Naive thymus-derived CD4-positive, alpha-beta T cell (primary cell): ENCODE measurements at regions of chr11 and their contacts with region 1.

Region 1: DNA sequence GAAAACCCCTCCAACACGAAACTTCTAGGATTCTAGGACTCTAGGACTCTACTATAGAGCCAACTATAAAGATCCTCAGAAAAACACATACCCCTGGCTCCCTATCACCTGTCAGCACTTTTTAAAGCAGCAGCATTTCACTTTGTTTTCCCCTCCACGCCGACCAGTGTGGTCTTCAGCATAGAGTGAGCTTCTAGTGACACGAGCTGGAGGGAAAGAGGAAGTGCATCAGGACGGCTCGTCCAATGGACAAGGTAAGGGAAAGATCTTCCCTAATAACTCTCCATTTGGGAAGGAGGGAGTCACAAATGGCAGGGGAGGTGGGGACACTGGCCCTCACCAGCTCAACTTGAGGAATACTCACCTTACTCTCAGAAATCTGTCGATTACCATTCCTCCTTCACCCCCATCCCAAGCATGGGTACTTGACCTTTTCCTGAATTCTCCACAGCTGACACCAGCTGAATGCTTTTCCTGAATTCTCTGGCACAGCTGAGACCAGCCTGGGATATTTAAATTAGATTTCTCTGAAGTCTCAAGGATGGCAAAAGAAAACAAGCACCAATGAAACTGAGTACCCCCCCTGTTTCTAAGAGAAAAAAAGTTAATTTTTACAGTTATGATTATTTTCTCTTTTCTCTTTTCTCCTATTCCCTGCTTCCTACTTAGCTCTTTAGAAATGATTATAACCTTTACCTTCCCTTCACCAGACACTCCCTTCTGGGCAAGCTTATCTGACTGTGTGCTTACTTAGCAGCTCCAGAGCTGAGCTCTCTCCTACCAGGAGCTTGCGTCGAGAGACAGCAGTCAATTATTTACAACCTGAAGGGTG is 33.3 kb upstream of the NNMT start:
- DNase-seq: peak in 6 of 9 donors; percentile 10 to 41 (median 27)
- ATAC-seq: peak; percentile 56
- H3K4me3 ChIP-seq: no peak overlapping the region
- H3K4me3 Mint-ChIP-seq: no peak overlapping the region
- H3K27ac ChIP-seq: no peak overlapping the region
- H3K27ac Mint-ChIP-seq: no peak overlapping the region
- H3K4me1 ChIP-seq: no peaks in the 10 kb centered on the region
- H3K4me1 Mint-ChIP-seq: peaks cover 0 to 7% (median 4%) of the 10 kb centered on the region in 7 donors
- H3K27me3 ChIP-seq: no peaks in the 10 kb centered on the region
- H3K27me3 Mint-ChIP-seq: peaks cover 0 to 5% (median 3%) of the 10 kb centered on the region in 5 donors

Region 2: DNA sequence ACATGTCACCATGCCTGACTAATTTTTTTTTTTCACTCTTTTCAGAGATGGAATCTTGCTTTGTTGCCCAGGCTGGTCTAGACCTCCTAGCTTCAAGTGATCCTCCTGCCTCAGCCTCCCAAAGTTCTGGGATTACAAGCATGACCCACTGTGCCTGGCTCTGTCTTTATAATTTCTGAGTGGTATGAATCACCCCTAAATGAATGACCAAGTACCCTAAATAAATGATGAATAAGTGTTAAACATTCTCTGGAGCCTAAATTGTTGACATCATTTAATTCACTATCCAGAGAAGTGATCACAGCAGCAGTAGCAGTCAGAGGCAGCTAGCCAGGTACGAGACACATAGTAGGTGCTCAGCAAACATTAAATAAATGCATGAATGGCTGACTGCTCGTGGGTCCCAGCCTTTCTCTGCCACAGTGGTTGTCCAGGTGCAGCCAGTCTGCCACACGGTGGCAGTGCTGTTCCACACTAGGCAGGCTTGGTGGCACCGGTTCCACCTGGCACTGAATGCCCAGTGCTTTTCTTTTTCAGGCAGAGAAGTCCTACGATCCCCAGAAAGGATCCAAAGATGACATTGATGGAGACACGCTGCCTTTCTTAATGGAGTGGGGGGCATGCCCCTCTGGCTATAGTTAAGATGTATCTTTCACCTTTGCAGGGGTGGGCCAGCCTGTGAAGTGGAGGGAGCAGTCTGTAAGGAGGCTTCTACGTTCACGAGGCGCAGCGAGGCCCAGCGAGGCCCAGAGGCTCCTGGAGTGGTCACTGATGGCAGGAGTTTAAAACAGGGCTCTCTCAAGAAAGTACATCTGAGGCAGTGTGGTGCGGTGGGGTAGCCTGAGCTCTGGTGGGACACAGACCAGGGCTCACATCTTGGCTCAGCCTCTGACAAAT is 957.2 kb before region 1 on chr11:
- CTCF ChIA-PET with region 1: interaction called, 3 read pairs
- POLR2A ChIA-PET with region 1: no interaction called
- intact Hi-C with region 1: loop called (anchors 2 to 5 kb)
- DNase-seq: peak; percentile 32 to 68 (median 61)
- ATAC-seq: peak; percentile 95
- H3K4me3 ChIP-seq: no peak overlapping the region
- H3K4me3 Mint-ChIP-seq: no peak overlapping the region
- H3K27ac ChIP-seq: no peak overlapping the region
- H3K27ac Mint-ChIP-seq: no peak overlapping the region
- H3K4me1 ChIP-seq: no peaks in the 10 kb centered on the region
- H3K4me1 Mint-ChIP-seq: peaks cover 0 to 8% (median 3%) of the 10 kb centered on the region in 7 donors
- H3K27me3 ChIP-seq: no peaks in the 10 kb centered on the region
- H3K27me3 Mint-ChIP-seq: peaks cover 0 to 25% (median 11%) of the 10 kb centered on the region in 5 donors

Region 3: GRCh38 chr11:113896156-113896879 is 366.6 kb before region 1 on chr11:
- CTCF ChIA-PET with region 1: interaction called, 143 read pairs
- POLR2A ChIA-PET with region 1: interaction called, 3 read pairs
- intact Hi-C with region 1: loop called (anchors 1 kb)
- DNase-seq: peak in 5 of 9 donors; percentile 24 to 42 (median 37)
- ATAC-seq: peak; percentile 80
- H3K4me3 ChIP-seq: no peak overlapping the region
- H3K4me3 Mint-ChIP-seq: no peak overlapping the region
- H3K27ac ChIP-seq: no peak overlapping the region
- H3K27ac Mint-ChIP-seq: no peak overlapping the region
- H3K4me1 ChIP-seq: no peaks in the 10 kb centered on the region
- H3K4me1 Mint-ChIP-seq: peaks cover 0 to 4% (median 0%) of the 10 kb centered on the region in 7 donors
- H3K27me3 ChIP-seq: no peaks in the 10 kb centered on the region
- H3K27me3 Mint-ChIP-seq: peaks cover 0 to 9% (median 0%) of the 10 kb centered on the region in 5 donors

Region 4: DNA sequence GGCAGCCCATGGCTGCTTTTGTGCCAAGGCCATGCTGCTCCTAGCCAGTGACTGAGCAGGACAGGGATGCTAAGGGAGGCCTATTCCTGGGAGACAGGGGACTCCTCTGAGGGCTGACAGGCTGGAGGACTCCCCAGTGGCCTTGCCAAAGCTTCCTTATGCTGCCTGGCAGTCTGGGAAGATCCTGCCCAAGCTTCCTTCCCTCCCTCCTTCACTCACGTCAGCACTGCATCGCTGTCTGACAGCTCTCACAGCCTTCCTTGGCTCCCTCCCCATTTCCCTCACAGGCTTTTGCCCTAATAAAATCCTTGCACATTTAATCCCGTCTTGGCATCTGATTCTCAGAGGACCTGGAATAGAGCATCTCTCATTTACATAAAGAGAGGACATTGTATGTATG is 261.5 kb before region 1 on chr11:
- CTCF ChIA-PET with region 1: interaction called, 117 read pairs
- POLR2A ChIA-PET with region 1: no interaction called
- intact Hi-C with region 1: no loop called
- DNase-seq: no peak
- ATAC-seq: no peak
- H3K4me3 ChIP-seq: no peak overlapping the region
- H3K4me3 Mint-ChIP-seq: no peak overlapping the region
- H3K27ac ChIP-seq: no peak overlapping the region
- H3K27ac Mint-ChIP-seq: peak overlapping the region in 1 of 9 donors; percentile 11
- H3K4me1 ChIP-seq: no peaks in the 10 kb centered on the region
- H3K4me1 Mint-ChIP-seq: no peaks in the 10 kb centered on the region
- H3K27me3 ChIP-seq: no peaks in the 10 kb centered on the region
- H3K27me3 Mint-ChIP-seq: peaks cover 4 to 15% (median 12%) of the 10 kb centered on the region in 5 donors

Region 5: GRCh38 chr11:114036156-114036811 is 226.6 kb before region 1 on chr11:
- CTCF ChIA-PET with region 1: interaction called, 148 read pairs
- POLR2A ChIA-PET with region 1: interaction called, 7 read pairs
- intact Hi-C with region 1: loop called (anchors 1 kb)
- DNase-seq: peak; percentile 16 to 57 (median 42)
- ATAC-seq: peak; percentile 89
- H3K4me3 ChIP-seq: no peak overlapping the region
- H3K4me3 Mint-ChIP-seq: peak overlapping the region in 5 of 10 donors; percentile 11 to 57 (median 44)
- H3K27ac ChIP-seq: no peak overlapping the region
- H3K27ac Mint-ChIP-seq: peak overlapping the region in 1 of 9 donors; percentile 28
- H3K4me1 ChIP-seq: peaks cover 0 to 3% of the 10 kb centered on the region in 2 donors
- H3K4me1 Mint-ChIP-seq: peaks cover 0 to 5% (median 0%) of the 10 kb centered on the region in 7 donors
- H3K27me3 ChIP-seq: no peaks in the 10 kb centered on the region
- H3K27me3 Mint-ChIP-seq: peaks cover 0 to 34% (median 0%) of the 10 kb centered on the region in 5 donors

Region 6: DNA sequence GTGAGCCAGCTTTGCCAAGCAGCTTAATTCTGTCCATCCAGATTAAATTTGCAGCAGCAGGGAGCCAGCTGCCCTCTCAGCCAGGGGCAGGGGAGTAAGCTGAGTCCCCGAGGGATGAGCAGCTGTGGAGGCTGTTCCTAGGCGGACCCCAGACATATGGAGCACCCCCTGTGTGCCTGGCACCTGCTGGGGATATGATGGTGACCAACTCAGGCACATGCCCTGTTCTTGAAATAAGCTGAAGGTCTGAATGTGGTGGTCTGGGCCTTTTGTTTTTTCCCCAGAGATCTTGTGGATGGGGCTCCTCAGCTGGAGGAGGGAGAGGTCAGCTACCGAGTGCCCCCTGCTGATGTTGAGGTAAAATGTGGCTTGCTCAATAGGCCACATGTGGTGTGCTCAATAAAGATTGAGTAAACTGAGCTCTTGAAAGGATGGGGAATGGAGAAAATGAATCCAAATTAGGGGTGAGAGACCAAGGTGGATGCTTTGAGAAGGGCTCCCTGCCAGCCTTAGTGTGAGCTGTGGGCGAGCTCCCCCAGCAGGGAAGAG is 70.0 kb before region 1 on chr11:
- CTCF ChIA-PET with region 1: interaction called, 29 read pairs
- POLR2A ChIA-PET with region 1: no interaction called
- intact Hi-C with region 1: loop called in 1 of 2 experiments (anchors 1 kb)
- DNase-seq: no peak
- ATAC-seq: no peak
- H3K4me3 ChIP-seq: no peak overlapping the region
- H3K4me3 Mint-ChIP-seq: no peak overlapping the region
- H3K27ac ChIP-seq: no peak overlapping the region
- H3K27ac Mint-ChIP-seq: peak overlapping the region in 5 of 9 donors; percentile 16 to 54 (median 39)
- H3K4me1 ChIP-seq: peaks cover 3 to 8% of the 10 kb centered on the region in 2 donors
- H3K4me1 Mint-ChIP-seq: peaks cover 11 to 57% (median 37%) of the 10 kb centered on the region in 7 donors
- H3K27me3 ChIP-seq: no peaks in the 10 kb centered on the region
- H3K27me3 Mint-ChIP-seq: peaks cover 0 to 3% (median 0%) of the 10 kb centered on the region in 5 donors

Region 7: GRCh38 chr11:114250993-114251814 is 11.7 kb before region 1 on chr11:
- CTCF ChIA-PET with region 1: interaction called, 15 read pairs
- POLR2A ChIA-PET with region 1: no interaction called
- intact Hi-C with region 1: no loop called
- DNase-seq: no peak
- ATAC-seq: no peak
- H3K4me3 ChIP-seq: no peak overlapping the region
- H3K4me3 Mint-ChIP-seq: no peak overlapping the region
- H3K27ac ChIP-seq: no peak overlapping the region
- H3K27ac Mint-ChIP-seq: peak overlapping the region in 2 of 9 donors; percentile 11 to 58
- H3K4me1 ChIP-seq: no peaks in the 10 kb centered on the region
- H3K4me1 Mint-ChIP-seq: peaks cover 0 to 6% (median 0%) of the 10 kb centered on the region in 7 donors
- H3K27me3 ChIP-seq: no peaks in the 10 kb centered on the region
- H3K27me3 Mint-ChIP-seq: peaks cover 0 to 3% (median 0%) of the 10 kb centered on the region in 5 donors